PC-3 (cell line): ENCODE measurements at regions of chr2 and their contacts with region 1.

Region 1: DNA sequence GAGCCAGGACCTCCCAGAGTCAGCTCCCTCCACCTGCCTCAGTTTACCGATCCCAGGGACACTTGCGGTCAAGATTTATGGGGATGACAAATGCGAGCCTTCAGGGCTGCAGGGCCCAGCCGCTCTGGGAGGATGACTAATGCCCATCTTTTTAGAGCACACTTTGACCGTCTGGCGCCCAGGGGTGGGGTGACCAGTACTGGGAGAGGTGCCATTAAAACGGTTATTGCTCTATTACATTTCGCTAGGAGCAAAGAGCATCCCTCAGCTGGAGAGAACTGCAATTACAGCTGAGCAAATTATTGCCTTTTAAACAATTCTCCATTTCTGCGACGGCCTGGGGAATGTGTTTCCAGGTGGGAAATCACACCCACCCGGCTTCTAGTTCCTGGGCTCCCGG is 42.6 kb upstream of the HPCAL1 start:
- DNase-seq: peak; percentile 92
- ATAC-seq: peak; percentile 96
- H3K4me3 ChIP-seq: no peak overlapping the region
- H3K27ac ChIP-seq: no peak overlapping the region
- H3K4me1 ChIP-seq: peaks cover 28% of the 10 kb centered on the region
- H3K27me3 ChIP-seq: no peaks in the 10 kb centered on the region
- CTCF ChIP-seq: peak; percentile 48

Region 2: DNA sequence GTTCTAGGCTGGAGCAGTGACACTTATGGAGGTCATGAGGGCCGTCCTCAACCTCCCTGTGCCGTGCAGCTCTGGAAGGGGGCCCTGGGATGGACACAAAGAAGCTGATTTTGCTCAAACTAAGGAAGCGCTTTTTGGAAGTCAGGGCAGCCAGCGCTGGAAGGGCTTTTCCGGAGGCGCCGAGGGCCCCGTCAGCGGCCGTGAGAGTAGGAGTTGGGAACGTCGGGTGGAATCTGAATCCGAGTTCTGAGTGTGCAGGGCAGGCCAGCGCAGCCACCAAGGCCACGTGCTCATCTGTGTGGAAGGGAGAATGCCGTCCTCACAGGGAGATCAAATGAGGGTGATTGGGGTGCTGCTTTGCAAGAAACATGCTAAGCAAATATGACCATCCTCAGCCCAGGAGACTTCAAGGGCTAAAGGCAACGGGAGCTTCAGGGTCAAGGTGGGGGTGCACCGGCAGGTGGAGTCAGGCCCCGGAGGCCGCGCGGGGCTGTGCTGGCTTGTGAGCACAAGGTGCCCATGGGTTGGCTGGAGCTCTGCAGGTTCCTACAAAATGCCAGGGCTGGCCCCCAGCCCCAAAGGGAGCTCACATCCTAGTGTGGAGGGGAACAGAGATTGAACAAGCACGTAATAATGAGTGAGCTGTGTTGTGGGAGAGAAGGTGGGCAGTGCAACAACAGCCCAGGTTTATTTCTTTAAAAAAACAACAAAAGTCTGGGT is 27.9 kb before region 1 on chr2:
- CTCF ChIA-PET with region 1: interaction called, 12 read pairs
- POLR2A ChIA-PET with region 1: no interaction called
- intact Hi-C with region 1: no loop called
- DNase-seq: no peak
- ATAC-seq: no peak
- H3K4me3 ChIP-seq: no peak overlapping the region
- H3K27ac ChIP-seq: no peak overlapping the region
- H3K4me1 ChIP-seq: no peaks in the 10 kb centered on the region
- H3K27me3 ChIP-seq: no peaks in the 10 kb centered on the region
- CTCF ChIP-seq: no peak

Region 3: GRCh38 chr2:10282918-10283728 is 23.0 kb after region 1 on chr2:
- CTCF ChIA-PET with region 1: no interaction called
- POLR2A ChIA-PET with region 1: no interaction called
- intact Hi-C with region 1: loop called (anchors 1 kb)
- DNase-seq: peak; percentile 98
- ATAC-seq: peak; percentile 77
- H3K4me3 ChIP-seq: no peak overlapping the region
- H3K27ac ChIP-seq: peak overlapping the region; percentile 95
- H3K4me1 ChIP-seq: peaks cover 60% of the 10 kb centered on the region
- H3K27me3 ChIP-seq: no peaks in the 10 kb centered on the region
- CTCF ChIP-seq: no peak